ENCODE measurements at regions of chr4 and their contacts with region 1.

Region 1: GRCh38 chr4:1579901-1580691 is 104.0 kb downstream of the FAM53A start:
- DNase-seq: peak; percentile 98
- ATAC-seq: peak; percentile 79
- H3K4me3 Mint-ChIP-seq: peak overlapping the region; percentile 60
- H3K27ac Mint-ChIP-seq: no peak overlapping the region
- H3K4me1 Mint-ChIP-seq: peaks cover 4% of the 10 kb centered on the region
- H3K27me3 Mint-ChIP-seq: no peaks in the 10 kb centered on the region

Region 2: DNA sequence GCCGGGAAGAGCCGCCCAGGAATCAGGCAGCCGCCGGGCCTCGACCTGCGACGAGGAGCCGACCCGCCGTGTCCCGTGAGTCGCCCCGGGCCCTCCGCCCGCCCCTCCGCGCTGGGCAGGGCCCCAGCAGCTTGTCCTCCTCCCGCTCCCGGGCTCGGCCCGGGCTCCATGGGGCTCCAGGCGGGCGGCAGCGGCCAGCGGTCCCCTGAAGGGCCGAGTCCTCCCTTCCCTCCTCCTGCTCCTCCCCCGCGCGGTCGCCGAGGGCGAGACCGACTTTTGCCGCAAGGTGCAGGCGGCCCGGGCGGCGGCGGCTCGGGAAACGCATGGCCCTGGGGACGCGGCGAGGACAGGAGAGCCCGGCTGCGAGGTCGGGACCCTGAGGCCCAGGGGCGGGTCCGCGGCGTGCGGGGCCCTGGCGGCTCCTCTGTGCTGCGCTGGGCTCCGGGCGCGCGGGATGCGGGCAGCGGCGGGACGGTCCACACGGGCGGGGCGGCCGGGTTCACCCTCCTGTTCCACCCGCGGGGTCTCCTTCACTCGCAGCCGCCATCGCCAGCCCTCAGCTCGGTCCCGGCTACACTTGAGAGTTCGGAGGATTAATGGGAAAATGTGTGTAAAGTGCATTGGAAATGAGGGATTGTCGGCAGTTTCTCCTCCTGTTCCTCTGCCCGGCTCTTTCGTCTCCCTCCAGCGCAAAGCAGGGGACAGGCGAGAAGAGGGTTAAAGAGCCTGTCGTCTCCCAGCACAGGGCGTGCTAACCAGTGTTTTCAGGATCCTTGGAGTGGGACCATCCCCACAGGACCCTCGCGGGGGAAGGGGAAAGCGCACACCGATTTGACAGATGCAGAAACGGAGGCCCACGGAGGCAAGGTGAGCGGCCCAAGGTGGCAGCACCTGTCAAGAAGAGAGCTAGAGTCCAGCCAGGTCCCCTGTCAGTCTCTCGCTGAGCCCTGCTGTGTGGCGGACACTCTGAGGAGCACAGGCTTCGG is 1472.4 kb before region 1 on chr4:
- CTCF ChIA-PET with region 1: no interaction called
- POLR2A ChIA-PET with region 1: no interaction called
- intact Hi-C with region 1: no loop called
- DNase-seq: peak; percentile 18
- ATAC-seq: no peak
- H3K4me3 Mint-ChIP-seq: no peak overlapping the region
- H3K27ac Mint-ChIP-seq: no peak overlapping the region
- H3K4me1 Mint-ChIP-seq: peaks cover 2% of the 10 kb centered on the region
- H3K27me3 Mint-ChIP-seq: peaks cover 51% of the 10 kb centered on the region

Region 3: DNA sequence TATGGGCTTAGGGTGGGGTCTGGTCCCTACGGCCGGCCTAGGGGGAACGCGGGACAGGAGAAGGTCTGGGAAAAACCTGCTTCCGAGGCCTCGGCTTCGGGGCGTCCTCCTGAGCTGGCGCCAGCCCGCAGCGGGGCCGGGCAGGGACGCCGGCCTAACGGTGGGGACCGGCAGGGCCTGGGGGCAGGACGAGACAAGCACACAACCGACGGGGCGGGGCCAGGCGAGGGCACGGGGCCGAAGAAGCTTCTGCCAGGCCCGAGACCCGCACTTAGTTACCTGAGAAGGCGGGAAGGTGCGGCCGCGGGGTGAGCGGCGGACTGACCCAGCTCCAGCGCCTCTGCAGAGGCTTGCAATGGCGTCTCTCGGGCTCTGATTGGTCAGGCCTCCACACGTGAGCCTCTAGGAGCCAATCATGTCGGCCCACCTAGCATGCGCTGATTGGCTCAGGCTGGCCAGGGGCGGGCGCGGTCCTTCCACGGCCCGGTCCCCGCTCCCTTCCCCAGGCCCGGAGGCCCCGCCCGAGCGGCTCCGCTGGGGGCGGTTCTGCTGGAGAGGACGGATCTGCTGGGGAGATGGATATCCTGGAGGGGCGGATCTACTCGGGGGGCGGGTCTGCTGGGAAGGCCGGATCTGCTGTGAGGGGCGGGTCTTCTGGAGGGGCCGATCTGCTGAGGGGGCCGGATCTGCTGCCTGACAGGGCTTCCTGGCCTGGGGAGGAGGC is 798.4 kb before region 1 on chr4:
- CTCF ChIA-PET with region 1: no interaction called
- POLR2A ChIA-PET with region 1: no interaction called
- intact Hi-C with region 1: loop called in 1 of 2 experiments (anchors 2 kb)
- DNase-seq: peak; percentile 99
- ATAC-seq: peak; percentile 96
- H3K4me3 Mint-ChIP-seq: peak overlapping the region; percentile 82
- H3K27ac Mint-ChIP-seq: peak overlapping the region; percentile 93
- H3K4me1 Mint-ChIP-seq: peaks cover 50% of the 10 kb centered on the region
- H3K27me3 Mint-ChIP-seq: peaks cover 15% of the 10 kb centered on the region

Region 4: DNA sequence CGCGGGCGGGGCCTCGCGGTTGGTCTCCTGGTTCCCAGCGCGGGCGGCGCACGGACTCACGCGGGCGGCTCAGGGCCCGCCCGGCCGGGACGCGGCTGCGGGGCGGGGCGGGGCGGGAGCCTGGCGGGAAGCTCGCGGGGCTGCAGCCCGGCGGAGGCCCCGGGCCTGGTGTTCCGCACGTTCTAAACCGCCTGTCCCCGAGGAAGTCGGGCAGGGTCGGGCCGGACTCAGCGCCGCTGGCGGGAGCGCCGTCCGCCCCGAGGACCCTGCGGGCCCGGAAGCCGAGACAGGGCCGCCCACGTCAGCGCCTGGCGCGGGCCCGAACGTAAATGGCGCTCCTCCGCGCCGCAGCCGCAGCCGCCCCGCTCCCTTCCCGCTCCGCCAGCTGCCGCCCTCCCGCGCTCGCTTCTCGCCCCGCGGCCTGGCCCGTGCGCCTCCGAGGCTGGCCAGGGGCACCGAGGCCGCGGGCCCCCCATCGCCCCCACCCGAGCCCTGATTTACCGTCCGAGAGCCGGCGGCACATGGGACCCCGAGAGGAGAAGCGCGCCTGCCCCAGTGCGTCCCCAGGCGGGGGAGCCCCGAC is 330.9 kb before region 1 on chr4:
- CTCF ChIA-PET with region 1: no interaction called
- POLR2A ChIA-PET with region 1: no interaction called
- intact Hi-C with region 1: loop called in 1 of 2 experiments (anchors 1 kb)
- DNase-seq: peak; percentile 90
- ATAC-seq: peak; percentile 63
- H3K4me3 Mint-ChIP-seq: peak overlapping the region; percentile 80
- H3K27ac Mint-ChIP-seq: peak overlapping the region; percentile 94
- H3K4me1 Mint-ChIP-seq: peaks cover 74% of the 10 kb centered on the region
- H3K27me3 Mint-ChIP-seq: no peaks in the 10 kb centered on the region

Region 5: DNA sequence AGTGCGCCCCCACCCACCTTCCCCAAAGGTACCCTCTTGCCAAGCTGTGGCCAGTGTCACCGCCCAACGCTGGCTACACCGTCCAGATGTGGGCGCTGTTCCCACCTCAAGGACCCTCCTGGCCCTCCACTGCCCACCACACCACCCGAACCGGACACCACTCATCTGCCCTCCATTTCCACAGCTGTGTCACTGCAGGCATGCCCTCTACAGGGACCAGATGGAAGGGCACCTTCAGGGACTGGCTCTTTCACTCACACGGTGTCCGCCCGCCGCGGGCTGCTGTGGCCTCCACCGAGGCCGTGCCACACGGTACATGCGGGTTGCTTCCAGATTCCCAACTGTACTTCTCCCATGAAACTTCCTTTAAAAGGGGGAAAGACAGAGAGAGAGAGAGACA is 16.3 kb after region 1 on chr4:
- CTCF ChIA-PET with region 1: no interaction called
- POLR2A ChIA-PET with region 1: no interaction called
- intact Hi-C with region 1: no loop called
- DNase-seq: no peak
- ATAC-seq: no peak
- H3K4me3 Mint-ChIP-seq: no peak overlapping the region
- H3K27ac Mint-ChIP-seq: no peak overlapping the region
- H3K4me1 Mint-ChIP-seq: no peaks in the 10 kb centered on the region
- H3K27me3 Mint-ChIP-seq: peaks cover 2% of the 10 kb centered on the region

Region 6: GRCh38 chr4:1683736-1684505 is 103.8 kb after region 1 on chr4 and contains the start of gene FAM53A:
- CTCF ChIA-PET with region 1: no interaction called
- POLR2A ChIA-PET with region 1: no interaction called
- intact Hi-C with region 1: loop called in 1 of 2 experiments (anchors 1 kb)
- DNase-seq: no peak
- ATAC-seq: peak; percentile 96
- H3K4me3 Mint-ChIP-seq: peak within 1 kb of the TSS; percentile 69
- H3K27ac Mint-ChIP-seq: peak within 1 kb of the TSS; percentile 69
- H3K4me1 Mint-ChIP-seq: peaks cover 12% of the 10 kb centered on the region
- H3K27me3 Mint-ChIP-seq: no peaks in the 10 kb centered on the region
- total RNA-seq, gene FAM53A: 2.0 to 2.5 TPM

Region 7: GRCh38 chr4:2008875-2009703 is 429.0 kb after region 1 on chr4 and contains the start of gene NELFA:
- CTCF ChIA-PET with region 1: no interaction called
- POLR2A ChIA-PET with region 1: no interaction called
- intact Hi-C with region 1: loop called in 1 of 2 experiments (anchors 2 kb)
- DNase-seq: peak; percentile 97
- ATAC-seq: peak; percentile 81
- H3K4me3 Mint-ChIP-seq: peak within 1 kb of the TSS; percentile 87
- H3K27ac Mint-ChIP-seq: peak within 1 kb of the TSS; percentile 90
- H3K4me1 Mint-ChIP-seq: peaks cover 34% of the 10 kb centered on the region
- H3K27me3 Mint-ChIP-seq: no peaks in the 10 kb centered on the region
- total RNA-seq, gene NELFA: 41.6 to 48.3 TPM

Region 8: DNA sequence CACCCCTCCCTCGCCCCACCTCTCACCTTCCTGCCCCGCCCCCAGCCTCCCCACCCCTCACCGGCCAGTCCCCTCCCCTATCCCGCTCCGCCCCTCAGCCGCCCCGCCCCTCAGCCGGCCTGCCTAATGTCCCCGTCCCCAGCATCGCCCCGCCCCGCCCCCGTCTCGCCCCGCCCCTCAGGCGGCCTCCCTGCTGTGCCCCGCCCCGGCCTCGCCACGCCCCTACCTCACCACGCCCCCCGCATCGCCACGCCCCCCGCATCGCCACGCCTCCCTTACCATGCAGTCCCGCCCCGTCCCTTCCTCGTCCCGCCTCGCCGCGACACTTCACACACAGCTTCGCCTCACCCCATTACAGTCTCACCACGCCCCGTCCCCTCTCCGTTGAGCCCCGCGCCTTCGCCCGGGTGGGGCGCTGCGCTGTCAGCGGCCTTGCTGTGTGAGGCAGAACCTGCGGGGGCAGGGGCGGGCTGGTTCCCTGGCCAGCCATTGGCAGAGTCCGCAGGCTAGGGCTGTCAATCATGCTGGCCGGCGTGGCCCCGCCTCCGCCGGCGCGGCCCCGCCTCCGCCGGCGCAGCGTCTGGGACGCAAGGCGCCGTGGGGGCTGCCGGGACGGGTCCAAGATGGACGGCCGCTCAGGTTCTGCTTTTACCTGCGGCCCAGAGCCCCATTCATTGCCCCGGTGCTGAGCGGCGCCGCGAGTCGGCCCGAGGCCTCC is 1494.1 kb after region 1 on chr4 and contains the starts of genes HTT and HTT-AS:
- CTCF ChIA-PET with region 1: no interaction called
- POLR2A ChIA-PET with region 1: no interaction called
- intact Hi-C with region 1: loop called in 1 of 2 experiments (anchors 1 kb)
- DNase-seq: peak; percentile 100
- ATAC-seq: peak; percentile 89
- H3K4me3 Mint-ChIP-seq: peak within 1 kb of the TSS; percentile 95
- H3K27ac Mint-ChIP-seq: peak within 1 kb of the TSS; percentile 90
- H3K4me1 Mint-ChIP-seq: peaks cover 24% of the 10 kb centered on the region
- H3K27me3 Mint-ChIP-seq: no peaks in the 10 kb centered on the region
- total RNA-seq, gene HTT: 80.1 to 127 TPM
- total RNA-seq, gene HTT-AS: not detected